ENCODE measurements at regions of chrX and their contacts with region 1.

Region 1: DNA sequence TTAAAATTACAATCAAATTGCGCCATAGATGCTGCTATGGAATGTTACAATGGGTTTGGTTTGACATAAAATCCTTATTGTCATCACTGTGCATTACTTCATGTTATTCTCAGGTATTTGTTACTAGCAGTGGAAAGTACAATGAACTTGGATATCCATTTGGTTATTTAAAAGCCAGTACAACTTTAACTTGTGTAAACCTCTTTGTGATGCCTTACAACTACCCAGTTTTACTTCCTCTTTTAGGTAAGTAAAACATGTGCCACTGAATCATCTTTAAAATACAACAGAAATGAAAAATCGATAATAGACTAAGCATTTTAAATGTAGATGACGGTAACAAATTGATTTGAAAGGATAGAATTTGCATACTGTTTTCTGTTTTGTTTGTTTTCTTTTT is 35.6 kb downstream of the INTS6L start:
- DNase-seq: peak; percentile 38
- H3K4me3 ChIP-seq: no peak overlapping the region
- H3K27ac ChIP-seq: peak overlapping the region; percentile 27
- H3K4me1 ChIP-seq: peaks cover 15% of the 10 kb centered on the region
- CTCF ChIP-seq: no peak

Region 2: DNA sequence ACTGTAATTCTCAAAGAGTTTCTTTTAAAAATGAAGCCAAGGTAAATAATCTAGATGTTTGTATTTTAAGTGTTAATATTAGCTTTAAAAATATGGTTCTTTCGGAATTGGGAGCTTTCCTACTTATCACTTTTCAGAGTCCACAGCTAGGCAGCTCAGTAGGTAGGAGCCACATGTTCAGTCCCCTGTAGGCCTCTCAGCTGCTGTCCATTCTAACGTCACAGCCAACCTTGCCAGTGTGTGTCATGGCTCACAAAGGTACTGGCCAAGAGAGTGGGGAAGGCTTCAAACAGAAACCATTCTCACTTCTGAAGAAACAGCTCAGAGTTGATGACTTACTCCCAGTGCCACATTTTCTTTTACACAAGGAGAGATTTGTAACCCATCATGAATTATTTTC is 881.7 kb after region 1 on chrX:
- CTCF ChIA-PET with region 1: no interaction called
- POLR2A ChIA-PET with region 1: interaction called, 10 read pairs
- intact Hi-C with region 1: no loop called
- DNase-seq: no peak
- H3K4me3 ChIP-seq: no peak overlapping the region
- H3K27ac ChIP-seq: no peak overlapping the region
- H3K4me1 ChIP-seq: no peaks in the 10 kb centered on the region
- CTCF ChIP-seq: no peak

Measured in OCI-LY7 (cell line).